ENCODE measurements at regions of chr1 and their contacts with region 1.

Region 1: DNA sequence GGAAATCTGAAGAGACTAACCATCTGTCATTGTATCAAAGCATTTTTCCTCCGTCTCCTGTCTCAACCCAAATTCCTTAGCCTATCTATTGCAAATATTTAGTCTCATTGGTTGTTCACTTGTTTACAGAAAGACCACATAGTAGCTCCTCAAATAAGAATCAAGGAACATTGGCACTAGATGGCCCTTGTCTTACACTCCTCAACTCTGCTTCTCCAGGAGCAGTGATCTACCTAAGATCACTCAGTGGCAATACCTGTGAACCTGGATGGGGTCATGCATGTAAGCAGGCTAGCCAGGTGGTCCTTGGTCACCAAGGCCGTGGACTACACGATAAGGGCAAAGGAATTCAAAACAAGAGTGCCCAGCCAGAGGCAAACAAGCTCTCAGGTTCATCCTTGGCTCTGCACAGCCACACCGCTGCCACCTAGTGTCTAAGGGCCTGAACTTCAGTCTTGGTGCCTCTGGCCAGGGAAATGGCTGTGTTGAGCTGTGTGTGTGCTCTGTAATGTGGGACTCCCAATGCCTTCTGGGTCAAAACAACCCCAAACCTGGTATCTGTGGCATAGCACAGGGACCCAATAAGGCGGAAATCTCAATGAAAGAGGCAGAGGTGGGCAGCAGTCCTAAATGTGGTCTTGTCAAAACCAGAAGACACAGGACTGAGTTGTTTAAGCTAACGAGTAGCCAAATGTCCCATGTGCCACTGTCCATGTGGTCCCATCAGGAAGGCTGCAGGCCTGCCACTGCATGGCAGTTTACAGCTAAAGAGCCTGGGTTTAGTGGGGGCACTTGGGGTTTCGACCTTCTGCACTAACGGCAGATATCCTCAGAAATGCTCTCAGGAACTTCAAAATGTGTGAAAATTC is 54.5 kb downstream of the GPR161 start:
- DNase-seq: peak; percentile 87
- H3K4me3 Mint-ChIP-seq: no peak overlapping the region
- H3K27ac Mint-ChIP-seq: no peak overlapping the region
- H3K4me1 Mint-ChIP-seq: no peaks in the 10 kb centered on the region
- H3K27me3 Mint-ChIP-seq: no peaks in the 10 kb centered on the region

Region 2: DNA sequence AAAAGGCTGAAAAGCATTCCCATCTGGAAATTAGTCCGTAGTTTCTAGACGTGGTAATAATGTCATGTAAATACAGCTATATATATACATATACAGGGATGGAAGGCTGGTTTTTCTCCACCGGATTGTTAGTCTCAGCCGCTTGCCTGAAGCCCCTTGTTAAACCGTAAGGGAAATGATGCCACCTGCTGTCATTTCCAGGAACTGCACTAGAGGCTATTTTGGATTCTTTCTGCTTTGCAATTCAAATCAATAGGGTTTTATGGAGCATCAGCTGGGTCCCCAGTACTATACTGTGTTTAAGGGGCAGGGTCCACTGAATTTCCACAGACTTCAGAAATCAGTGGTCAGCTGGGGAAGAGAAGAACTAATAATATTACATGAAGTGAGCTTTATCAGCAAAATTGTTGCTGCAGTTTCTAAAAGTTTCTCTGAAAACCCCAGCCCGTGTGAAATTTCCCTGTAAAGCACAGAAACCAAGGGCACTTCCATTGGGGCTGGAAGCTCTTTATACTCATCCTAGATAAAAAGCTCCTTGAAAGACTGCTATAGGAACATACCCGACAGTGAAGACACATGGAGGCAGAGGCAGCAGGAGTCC is 394.2 kb before region 1 on chr1:
- CTCF ChIA-PET with region 1: no interaction called
- intact Hi-C with region 1: loop called (anchors 1 kb)
- DNase-seq: peak; percentile 94
- H3K4me3 Mint-ChIP-seq: no peak overlapping the region
- H3K27ac Mint-ChIP-seq: peak overlapping the region; percentile 62
- H3K4me1 Mint-ChIP-seq: peaks cover 11% of the 10 kb centered on the region
- H3K27me3 Mint-ChIP-seq: no peaks in the 10 kb centered on the region

Region 3: GRCh38 chr1:167803358-167804207 is 278.7 kb before region 1 on chr1:
- CTCF ChIA-PET with region 1: interaction called, 3 read pairs
- intact Hi-C with region 1: loop called (anchors 1 kb)
- DNase-seq: peak; percentile 98
- H3K4me3 Mint-ChIP-seq: peak overlapping the region; percentile 50
- H3K27ac Mint-ChIP-seq: peak overlapping the region; percentile 80
- H3K4me1 Mint-ChIP-seq: peaks cover 24% of the 10 kb centered on the region
- H3K27me3 Mint-ChIP-seq: no peaks in the 10 kb centered on the region

Region 4: GRCh38 chr1:167936068-167936929 is 145.9 kb before region 1 on chr1 and contains the start of gene DCAF6:
- CTCF ChIA-PET with region 1: interaction called, 8 read pairs
- intact Hi-C with region 1: loop called (anchors 1 kb)
- DNase-seq: peak; percentile 97
- H3K4me3 Mint-ChIP-seq: peak within 1 kb of the TSS; percentile 85
- H3K27ac Mint-ChIP-seq: peak within 1 kb of the TSS; percentile 100
- H3K4me1 Mint-ChIP-seq: peaks cover 32% of the 10 kb centered on the region
- H3K27me3 Mint-ChIP-seq: no peaks in the 10 kb centered on the region
- total RNA-seq, gene DCAF6: 15.4 to 15.9 TPM

Region 5: DNA sequence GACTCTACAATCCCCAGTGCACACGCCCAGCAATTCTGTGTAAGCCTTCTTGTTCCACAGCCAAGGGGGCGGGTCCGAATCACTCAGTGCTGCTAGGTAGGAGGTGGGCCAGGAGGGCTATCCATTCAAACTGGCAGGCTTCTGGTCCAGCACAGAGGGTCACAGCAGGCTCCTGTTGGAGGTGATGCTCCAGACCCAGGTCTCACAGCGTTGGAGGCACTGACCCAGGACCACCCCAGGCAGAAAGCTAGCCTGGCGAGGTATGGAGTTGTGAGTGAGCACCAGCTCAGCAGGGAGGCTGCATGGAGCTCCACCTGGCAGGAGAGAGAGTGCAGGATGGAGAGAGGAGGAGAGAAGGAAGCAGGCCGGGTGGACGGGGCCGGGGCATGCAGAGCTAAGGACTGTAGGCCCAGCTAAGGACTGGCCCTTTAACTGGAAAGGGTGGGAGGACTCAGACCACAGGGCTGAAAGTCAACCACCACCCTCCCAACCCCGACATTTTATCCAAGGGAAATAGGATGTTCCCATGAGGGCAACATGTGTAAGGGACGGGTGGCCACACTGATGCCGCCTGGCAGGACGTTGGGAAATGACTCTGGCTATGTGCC is 15.8 kb after region 1 on chr1:
- CTCF ChIA-PET with region 1: interaction called, 36 read pairs
- intact Hi-C with region 1: no loop called
- DNase-seq: no peak
- H3K4me3 Mint-ChIP-seq: no peak overlapping the region
- H3K27ac Mint-ChIP-seq: no peak overlapping the region
- H3K4me1 Mint-ChIP-seq: no peaks in the 10 kb centered on the region
- H3K27me3 Mint-ChIP-seq: no peaks in the 10 kb centered on the region

Region 6: DNA sequence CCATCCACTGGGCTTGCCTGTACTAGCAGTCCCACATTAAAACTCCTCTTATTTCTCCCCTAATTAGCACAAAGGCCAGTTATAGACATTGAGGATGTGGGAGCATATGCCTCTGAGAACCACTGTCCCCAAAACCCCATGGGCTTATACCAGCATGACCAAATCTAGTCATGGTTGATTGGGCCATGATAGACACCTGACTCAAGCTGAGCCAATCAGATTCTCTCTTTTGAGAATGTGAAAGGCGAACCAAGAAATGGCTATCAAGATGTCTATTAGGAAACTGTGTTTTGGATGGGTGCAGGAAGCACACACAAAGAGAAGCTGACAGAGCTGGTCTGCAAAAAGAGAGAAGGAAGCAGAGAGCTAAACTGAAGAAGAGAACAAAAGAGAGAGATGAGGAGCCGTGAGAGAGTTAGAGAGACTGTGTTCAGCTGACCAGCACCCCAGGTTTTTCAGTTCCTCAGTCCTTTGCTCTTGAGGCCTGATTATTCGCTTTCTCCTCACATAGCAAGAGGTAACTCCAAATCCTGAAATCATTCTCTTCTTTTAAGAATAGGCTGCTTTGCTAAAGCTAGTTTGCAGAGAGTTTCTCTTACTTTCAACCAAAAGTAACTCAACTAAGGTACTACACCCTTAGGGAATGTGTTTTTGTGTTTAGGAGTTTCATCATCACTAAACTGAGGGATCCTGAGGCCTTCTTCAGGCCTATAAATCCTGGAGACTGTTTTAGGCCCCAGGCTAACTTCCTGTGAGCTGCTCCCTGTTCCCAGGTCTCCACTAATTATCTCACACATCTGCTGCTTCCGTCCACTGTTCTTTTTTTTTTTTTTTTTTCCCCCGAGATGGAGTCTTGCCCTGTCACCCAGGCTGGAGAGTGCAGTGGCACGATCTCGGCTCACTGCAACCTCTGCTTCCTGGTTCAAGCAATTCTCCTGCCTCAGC is 88.6 kb after region 1 on chr1:
- CTCF ChIA-PET with region 1: interaction called, 10 read pairs
- intact Hi-C with region 1: no loop called
- DNase-seq: no peak
- H3K4me3 Mint-ChIP-seq: no peak overlapping the region
- H3K27ac Mint-ChIP-seq: no peak overlapping the region
- H3K4me1 Mint-ChIP-seq: no peaks in the 10 kb centered on the region
- H3K27me3 Mint-ChIP-seq: peaks cover 6% of the 10 kb centered on the region

Region 7: DNA sequence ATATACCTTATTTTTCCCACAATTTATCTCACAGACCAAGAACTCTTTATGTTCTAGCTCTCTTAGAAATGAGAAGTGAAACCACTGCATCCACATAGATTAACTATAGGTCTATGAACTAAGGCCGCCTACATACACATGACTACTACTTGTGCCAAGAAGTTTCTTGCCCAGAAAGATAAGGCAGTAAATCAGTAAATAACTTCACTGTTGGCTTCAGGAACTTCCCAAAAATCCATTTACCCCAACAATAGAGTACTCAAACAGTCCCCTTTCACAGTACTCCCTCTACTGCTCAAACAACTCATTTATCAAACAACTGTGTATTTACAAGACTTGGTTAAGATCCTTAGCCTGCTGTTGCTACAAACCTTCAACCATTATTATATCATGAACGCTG is 1188.9 kb after region 1 on chr1:
- CTCF ChIA-PET with region 1: no interaction called
- intact Hi-C with region 1: no loop called
- DNase-seq: no peak
- H3K4me3 Mint-ChIP-seq: no peak overlapping the region
- H3K27ac Mint-ChIP-seq: no peak overlapping the region
- H3K4me1 Mint-ChIP-seq: no peaks in the 10 kb centered on the region
- H3K27me3 Mint-ChIP-seq: no peaks in the 10 kb centered on the region

Measured in activated naive CD4-positive, alpha-beta T cell treated with anti-CD3 and anti-CD28 coated beads for 36 hours (primary cell).